ENCODE measurements at regions of chr20 and their contacts with region 1.

Region 1: DNA sequence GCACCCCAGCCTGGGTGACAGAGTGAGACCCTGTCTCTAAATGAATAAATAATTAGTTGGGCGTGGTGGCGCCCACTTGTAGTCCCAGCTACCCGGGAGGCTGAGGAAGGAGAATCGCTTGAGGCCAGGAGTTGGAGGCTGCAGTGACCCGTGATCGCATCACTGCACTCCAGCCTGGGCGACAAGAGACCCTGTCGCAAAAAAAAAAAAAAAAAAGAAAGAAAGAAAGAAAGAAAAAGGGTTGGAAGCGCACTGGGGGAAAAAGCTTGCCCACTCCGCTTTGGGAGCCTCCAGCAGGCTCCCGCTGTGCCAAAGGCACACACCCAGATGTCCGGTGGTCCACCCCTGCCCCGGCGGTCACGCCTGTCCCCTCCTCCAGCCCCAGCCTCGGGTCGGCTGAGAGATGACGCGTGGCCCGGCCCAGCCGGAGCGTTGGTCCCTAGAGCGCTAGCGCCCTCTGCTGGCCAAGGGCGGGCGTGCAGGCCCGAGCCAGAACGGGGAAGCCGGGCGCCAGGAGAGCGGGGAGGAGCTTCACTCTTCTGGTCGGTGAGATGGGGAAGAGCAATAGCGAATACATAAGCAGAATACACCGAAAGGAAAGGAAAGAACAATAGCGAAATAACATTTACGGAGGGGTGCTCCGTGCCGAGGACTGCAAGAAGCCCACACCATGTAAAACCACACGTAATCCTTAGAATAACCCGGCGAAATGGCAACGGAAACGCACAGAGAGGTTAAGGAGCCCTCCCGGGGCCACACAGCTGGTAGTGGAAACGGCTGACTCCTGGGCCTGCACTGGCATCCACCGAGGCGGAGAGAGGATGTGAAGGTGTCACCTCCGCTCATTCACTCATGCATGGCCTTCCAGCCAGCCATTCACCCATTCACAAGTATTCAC is 41.7 kb downstream of the UBE2V1 start:
- DNase-seq: peak; percentile 97
- ATAC-seq: peak; percentile 84
- H3K4me3 Mint-ChIP-seq: peak overlapping the region; percentile 57
- H3K27ac Mint-ChIP-seq: no peak overlapping the region
- H3K4me1 Mint-ChIP-seq: peaks cover 24% of the 10 kb centered on the region
- H3K27me3 Mint-ChIP-seq: no peaks in the 10 kb centered on the region
- CTCF ChIP-seq: peak; percentile 100

Region 2: GRCh38 chr20:49915378-49916145 is 155.7 kb before region 1 on chr20 and contains the start of gene SPATA2:
- CTCF ChIA-PET with region 1: interaction called, 10 read pairs
- POLR2A ChIA-PET with region 1: no interaction called
- DNase-seq: peak; percentile 93
- ATAC-seq: peak; percentile 86
- H3K4me3 Mint-ChIP-seq: peak within 1 kb of the TSS; percentile 98
- H3K27ac Mint-ChIP-seq: peak within 1 kb of the TSS; percentile 100
- H3K4me1 Mint-ChIP-seq: peaks cover 19% of the 10 kb centered on the region
- H3K27me3 Mint-ChIP-seq: peaks cover 6% of the 10 kb centered on the region; the same call in 1 of the 2 replicates
- CTCF ChIP-seq: no peak
- total RNA-seq, gene SPATA2: 10.1 to 11.3 TPM (median 11.3 TPM) in 3 replicates

Region 3: DNA sequence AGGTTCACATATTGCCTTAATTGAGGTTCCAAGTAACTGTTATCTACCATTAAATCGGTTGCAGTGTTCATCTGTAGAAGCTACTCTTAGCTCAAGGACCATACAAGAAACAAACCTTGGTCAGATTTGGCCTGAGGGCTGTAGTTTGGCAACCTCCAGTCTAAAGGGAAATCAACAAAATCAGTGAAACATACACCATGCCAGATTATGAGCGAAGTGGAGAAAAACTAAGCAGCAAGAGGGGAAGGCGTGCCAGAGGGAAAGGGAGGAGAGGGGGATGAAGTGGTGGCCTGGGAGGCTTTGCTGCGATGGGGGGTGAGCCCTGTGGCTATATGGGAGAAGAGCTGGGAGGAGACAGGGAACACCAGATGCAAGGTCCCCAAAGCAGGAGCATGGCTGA is 97.2 kb before region 1 on chr20:
- CTCF ChIA-PET with region 1: interaction called, 288 read pairs
- POLR2A ChIA-PET with region 1: interaction called, 11 read pairs
- DNase-seq: no peak
- ATAC-seq: no peak
- H3K4me3 Mint-ChIP-seq: no peak overlapping the region
- H3K27ac Mint-ChIP-seq: no peak overlapping the region
- H3K4me1 Mint-ChIP-seq: peaks cover 10% of the 10 kb centered on the region
- H3K27me3 Mint-ChIP-seq: no peaks in the 10 kb centered on the region
- CTCF ChIP-seq: no peak

Region 4: DNA sequence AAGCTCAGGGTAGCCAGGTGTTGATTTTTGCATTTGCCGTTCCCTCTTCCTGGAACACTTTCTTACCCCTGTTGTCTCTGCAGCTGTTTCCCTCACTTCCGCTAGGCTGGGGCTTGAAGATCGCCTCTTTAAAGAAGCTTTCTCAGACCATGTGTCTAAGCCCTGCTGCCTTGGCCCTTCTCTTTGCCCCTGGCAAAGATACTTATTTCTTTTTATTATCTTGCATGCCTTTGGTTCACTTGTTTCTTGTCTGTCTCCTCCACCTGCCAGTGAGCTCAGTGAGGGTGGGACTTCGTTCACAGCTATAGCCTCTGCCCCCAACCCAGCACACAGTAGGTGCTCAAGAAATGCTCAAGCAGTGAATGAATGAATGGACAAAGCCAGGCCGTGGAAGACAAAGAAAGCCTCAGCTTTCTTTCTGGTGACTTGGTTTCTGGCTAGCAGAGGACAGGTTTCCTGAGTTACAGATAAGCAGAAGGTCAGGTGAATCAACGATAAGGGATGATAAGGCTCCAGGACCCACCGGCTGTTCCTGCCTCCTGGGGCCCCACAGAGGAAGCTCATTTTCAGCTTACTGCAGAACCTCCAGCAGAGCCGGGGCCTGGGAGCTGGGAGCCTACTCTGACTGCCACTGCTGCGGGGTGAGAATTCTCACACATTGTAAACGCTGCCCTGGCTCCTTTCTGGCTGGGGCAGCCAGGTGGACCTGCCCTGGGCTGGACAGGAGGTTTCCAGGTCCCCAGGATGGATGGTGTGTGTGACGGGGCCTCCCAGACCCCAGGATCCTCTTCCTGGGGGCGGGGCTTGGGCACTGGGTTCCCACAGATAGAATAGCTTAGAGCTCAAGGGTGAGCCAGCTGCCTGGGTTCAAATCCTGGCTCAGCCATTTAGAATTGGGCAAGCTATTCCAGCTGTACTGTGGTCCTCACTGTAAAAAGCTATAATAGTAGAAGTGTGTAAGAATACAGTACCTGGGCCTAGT is 58.7 kb before region 1 on chr20:
- CTCF ChIA-PET with region 1: interaction called, 31 read pairs
- POLR2A ChIA-PET with region 1: no interaction called
- DNase-seq: no peak
- ATAC-seq: no peak
- H3K4me3 Mint-ChIP-seq: no peak overlapping the region
- H3K27ac Mint-ChIP-seq: no peak overlapping the region
- H3K4me1 Mint-ChIP-seq: peaks cover 36% of the 10 kb centered on the region
- H3K27me3 Mint-ChIP-seq: peaks cover 9% of the 10 kb centered on the region
- CTCF ChIP-seq: no peak

Region 5: DNA sequence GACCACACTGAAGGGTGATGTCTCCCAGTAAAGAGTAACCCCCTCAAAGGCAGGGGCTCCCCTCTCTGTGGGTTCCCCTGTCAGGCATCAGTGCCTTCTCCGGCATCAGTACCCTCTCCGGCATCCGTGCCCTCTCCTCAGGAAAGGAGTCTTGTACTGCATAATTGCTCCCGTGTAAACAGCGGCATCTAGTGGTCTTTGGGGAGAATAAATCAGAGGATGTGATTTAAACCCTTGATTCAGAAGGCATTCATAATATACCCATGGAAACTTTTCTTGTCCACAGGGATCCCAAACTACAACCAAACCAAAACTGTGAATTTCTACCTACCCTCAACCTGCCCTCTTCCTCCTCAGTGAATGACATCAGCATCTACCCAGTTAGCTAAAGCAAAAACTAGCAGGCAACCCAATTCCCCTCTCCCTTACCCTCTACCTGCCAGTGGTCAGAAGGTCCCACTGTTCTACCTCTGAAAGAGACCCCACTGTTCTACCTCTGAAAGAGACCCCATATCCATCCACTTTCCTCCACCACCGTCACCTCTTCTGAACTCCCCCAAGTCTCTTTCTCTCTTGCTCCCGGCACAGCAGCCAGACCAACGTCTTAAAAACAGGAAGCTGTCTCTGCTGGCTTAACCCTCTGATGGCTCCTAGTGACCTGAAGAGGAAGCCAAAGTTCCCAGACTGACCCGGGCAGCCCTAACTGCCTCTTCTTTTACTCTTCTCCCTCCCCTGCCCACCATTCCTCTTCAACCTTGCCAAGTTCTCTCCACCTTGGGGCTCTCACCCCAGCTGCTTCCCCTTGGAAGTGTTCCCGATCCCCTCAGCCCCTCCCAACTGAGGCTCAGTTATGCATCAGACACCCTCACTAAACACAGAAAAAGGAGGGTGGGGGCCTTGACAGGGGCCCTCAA is 14.5 kb after region 1 on chr20:
- CTCF ChIA-PET with region 1: interaction called, 47 read pairs
- POLR2A ChIA-PET with region 1: no interaction called
- DNase-seq: peak; percentile 50
- ATAC-seq: peak; percentile 90
- H3K4me3 Mint-ChIP-seq: peak overlapping the region; percentile 31
- H3K27ac Mint-ChIP-seq: peak overlapping the region; percentile 87
- H3K4me1 Mint-ChIP-seq: peaks cover 27% of the 10 kb centered on the region
- H3K27me3 Mint-ChIP-seq: no peaks in the 10 kb centered on the region
- CTCF ChIP-seq: peak; percentile 62

Region 6: DNA sequence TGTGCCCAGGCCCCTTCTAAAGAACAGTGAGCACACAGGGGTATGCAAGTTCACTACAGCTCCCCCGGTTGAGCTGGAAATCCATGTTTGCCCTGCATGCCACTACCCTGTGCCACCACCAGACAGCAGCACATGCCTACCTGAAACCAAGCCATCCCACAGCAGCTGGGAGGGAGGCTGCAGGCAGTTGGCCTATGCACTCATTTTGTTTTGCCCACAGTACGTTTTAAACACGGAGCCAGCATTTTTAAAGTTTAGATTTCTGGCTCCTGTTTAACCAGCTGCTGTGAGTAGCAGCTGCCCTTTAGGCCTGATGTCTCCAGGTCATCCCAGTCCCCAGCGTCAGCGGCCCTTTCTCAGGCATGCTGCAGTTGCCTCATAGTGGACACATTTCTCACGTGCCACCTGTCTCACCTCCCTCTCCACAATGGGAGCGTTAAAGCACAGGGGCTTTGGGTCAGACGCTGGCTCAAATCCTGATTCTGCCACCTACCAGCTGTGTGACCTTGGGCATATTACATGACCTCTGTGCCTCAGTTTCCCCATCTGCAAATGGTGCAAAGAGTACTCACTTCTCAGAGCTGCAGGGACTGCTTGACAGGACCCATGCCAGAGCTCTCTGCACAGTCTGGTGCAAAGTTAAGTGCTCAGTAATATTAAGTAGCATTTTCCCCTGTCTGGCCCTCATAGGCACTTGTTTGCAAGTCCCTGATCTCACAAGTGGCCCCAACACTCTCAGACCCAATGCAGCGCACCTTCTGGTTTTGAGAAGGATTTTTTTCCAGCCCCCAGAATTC is 49.9 kb after region 1 on chr20:
- CTCF ChIA-PET with region 1: interaction called, 15 read pairs
- POLR2A ChIA-PET with region 1: interaction called, 4 read pairs
- DNase-seq: peak; percentile 70
- ATAC-seq: peak; percentile 86
- H3K4me3 Mint-ChIP-seq: no peak overlapping the region
- H3K27ac Mint-ChIP-seq: peak overlapping the region; percentile 57; the same call in 1 of the 2 replicates
- H3K4me1 Mint-ChIP-seq: peaks cover 6% of the 10 kb centered on the region
- H3K27me3 Mint-ChIP-seq: 0 out of 2 replicates have a peak, but pooled peaks cover 2% of the 10 kb centered on the region
- CTCF ChIP-seq: peak; percentile 47

Region 7: DNA sequence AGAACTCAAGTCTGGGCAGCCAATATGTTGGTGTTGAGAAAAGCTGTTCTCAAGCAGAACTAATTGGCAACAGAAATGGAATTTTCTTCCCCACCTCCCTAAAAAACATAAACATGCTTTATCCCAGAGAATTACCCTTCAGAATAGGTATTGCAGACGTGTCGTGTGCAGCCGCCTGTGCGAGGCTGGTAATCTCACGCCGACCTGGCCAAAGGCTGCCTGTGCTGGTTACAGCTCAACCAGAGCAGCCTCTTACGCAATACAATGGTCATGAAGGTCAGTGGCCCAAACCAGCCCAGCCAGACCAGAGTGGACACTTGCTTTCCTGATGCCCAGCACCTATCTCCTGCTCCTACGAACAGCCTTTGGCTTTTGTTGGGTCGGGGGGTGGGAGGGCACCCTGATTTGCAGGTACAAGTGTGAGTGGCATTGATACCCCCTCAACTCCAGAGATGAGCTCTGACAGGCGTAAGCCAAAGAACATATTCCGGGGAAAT is 609.2 kb after region 1 on chr20:
- CTCF ChIA-PET with region 1: no interaction called
- POLR2A ChIA-PET with region 1: no interaction called
- DNase-seq: no peak
- ATAC-seq: no peak
- H3K4me3 Mint-ChIP-seq: no peak overlapping the region
- H3K27ac Mint-ChIP-seq: no peak overlapping the region; the same call in 1 of the 2 replicates
- H3K4me1 Mint-ChIP-seq: peaks cover 24% of the 10 kb centered on the region
- H3K27me3 Mint-ChIP-seq: no peaks in the 10 kb centered on the region
- CTCF ChIP-seq: no peak

Measured in WTC11 (cell line).